ENCODE measurements at regions of chr12 and their contacts with region 1.

Region 1: GRCh38 chr12:54689984-54690383 is 41.8 kb upstream of the DCD start:
- DNase-seq: peak; percentile 37
- H3K4me3 ChIP-seq: no peak overlapping the region
- H3K27ac ChIP-seq: no peak overlapping the region
- H3K4me1 ChIP-seq: no peaks in the 10 kb centered on the region
- H3K27me3 ChIP-seq: no peaks in the 10 kb centered on the region
- CTCF ChIP-seq: peak; percentile 51

Region 2: DNA sequence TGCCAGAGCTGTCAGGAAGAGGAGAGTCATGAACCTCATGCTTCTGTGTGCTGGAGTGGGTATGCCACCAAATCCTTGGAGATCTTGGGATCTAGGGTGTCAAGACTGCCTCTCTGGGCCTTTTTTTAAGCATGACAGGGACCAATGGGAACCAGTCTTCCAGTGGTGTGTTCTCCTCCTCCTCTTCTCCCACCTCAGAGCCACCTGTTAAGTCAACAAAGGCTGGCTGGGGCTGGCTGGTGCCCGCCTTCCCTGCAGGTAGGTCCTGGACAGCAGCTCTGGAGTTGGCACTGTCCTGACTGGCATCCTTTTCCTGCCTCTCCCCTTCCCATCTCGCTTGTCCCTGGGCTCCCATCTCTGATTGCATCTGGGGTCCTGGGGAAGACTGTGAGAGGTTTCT is 41.7 kb before region 1 on chr12 and contains the start of gene DCD:
- CTCF ChIA-PET with region 1: no interaction called
- POLR2A ChIA-PET with region 1: no interaction called
- intact Hi-C with region 1: no loop called
- DNase-seq: no peak
- H3K4me3 ChIP-seq: no peak within 1 kb of the TSS
- H3K27ac ChIP-seq: no peak within 1 kb of the TSS
- H3K4me1 ChIP-seq: peaks cover 4% of the 10 kb centered on the region
- H3K27me3 ChIP-seq: no peaks in the 10 kb centered on the region
- CTCF ChIP-seq: no peak
- total RNA-seq, gene DCD: not detected in 2 replicates

Region 3: DNA sequence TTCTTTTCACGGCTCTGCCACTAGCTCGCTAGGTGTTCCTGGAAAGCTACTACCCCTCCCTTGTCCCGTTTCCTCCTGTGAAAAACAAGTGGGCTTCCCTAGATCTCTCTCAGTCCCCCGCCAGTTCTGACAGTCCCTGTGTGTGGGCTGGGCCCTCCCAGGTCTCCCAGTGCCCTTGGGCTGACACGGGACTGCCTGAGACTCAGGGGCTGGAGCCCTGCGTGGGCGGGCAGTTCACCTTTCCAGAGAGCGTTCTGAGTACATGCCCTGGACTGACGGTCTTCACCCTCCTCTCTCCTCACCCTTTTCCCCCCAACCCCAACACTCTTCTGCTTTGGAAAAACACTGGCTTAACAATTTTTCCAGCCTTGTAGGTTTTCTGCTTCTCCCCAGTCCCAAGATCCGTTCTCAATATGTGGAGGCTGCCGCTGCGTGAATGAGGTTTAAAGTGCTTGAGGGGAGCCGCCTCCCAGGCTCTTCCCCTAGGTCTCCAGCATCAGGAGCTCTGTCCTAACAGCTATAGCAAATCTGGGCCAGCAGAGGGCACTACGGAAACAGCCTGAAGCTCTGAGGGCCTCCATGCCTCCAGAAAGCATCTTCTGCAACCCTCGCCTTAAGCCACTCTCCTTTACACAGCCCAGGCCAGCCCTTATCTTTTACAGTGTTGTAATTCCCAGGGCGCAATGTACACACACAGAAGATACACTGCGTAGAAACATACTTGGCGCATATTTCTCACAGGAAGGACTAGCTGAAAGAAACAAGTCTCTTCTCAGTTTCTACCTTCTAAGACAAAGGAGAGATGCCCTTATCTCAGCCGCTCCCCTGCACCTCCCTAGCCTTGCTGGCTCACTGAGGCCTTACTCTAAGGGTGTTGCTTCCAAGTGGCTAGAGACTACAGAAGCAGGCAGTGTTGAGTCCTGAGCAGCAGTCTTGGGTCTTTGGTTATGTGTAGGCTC is 31.4 kb before region 1 on chr12:
- CTCF ChIA-PET with region 1: no interaction called
- POLR2A ChIA-PET with region 1: no interaction called
- intact Hi-C with region 1: loop called (anchors 5 kb)
- DNase-seq: peak; percentile 78
- H3K4me3 ChIP-seq: no peak overlapping the region
- H3K27ac ChIP-seq: peak overlapping the region; percentile 74
- H3K4me1 ChIP-seq: peaks cover 19% of the 10 kb centered on the region
- H3K27me3 ChIP-seq: no peaks in the 10 kb centered on the region
- CTCF ChIP-seq: peak; percentile 83